ENCODE measurements at regions of chr7 and their contacts with region 1.

Region 1: GRCh38 chr7:92833024-92833765 is 3.2 kb downstream of the CDK6 start:
- DNase-seq: peak; percentile 70 to 97 (median 83)

Region 2: DNA sequence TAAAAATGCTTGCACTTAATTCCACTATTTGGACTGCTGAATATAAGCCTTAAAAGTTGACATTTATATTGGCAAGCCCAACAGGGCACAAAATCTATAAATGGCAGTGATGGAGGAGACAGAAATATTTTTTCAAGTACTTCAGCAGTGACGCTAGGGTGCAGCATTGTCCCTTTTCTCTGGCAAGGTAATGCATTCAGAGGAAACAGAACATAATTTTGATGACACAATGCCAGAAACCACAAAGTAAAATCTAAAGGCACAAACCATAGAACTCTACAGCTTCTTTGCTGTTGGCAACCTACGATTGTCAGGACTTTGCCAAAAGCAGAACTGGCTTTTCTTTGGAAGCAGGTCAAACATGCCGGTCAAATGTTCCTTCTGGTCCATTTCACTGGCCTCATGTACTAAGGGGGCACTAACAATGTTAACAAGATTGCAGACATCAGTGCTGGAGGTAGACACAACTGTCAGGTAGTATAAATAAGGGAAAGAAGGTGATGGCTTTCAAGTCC is 212.1 kb before region 1 on chr7:
- intact Hi-C with region 1: loop called (anchors 2 kb)
- DNase-seq: peak in 8 of 10 donors; percentile 34 to 92 (median 62)

Region 3: DNA sequence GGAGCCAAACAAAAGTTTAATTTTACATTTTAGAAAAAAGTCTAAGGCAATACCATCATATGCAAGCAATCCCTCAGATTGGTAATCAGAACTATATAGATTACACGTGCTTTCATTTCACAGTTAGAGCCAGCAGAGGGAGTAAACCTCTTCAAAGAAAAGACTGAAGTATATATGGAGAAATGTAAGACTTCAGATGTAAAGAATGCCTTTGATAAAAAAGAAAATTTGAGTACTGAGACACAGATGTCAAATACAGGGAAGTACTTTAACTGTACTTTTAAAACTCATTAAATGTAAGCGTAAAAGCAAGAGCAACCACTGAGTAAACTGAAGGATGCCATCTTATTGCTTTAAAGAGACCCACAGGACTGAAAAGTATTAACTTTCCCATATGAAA is 141.6 kb before region 1 on chr7:
- intact Hi-C with region 1: loop called (anchors 1 kb)
- DNase-seq: no peak

Region 4: DNA sequence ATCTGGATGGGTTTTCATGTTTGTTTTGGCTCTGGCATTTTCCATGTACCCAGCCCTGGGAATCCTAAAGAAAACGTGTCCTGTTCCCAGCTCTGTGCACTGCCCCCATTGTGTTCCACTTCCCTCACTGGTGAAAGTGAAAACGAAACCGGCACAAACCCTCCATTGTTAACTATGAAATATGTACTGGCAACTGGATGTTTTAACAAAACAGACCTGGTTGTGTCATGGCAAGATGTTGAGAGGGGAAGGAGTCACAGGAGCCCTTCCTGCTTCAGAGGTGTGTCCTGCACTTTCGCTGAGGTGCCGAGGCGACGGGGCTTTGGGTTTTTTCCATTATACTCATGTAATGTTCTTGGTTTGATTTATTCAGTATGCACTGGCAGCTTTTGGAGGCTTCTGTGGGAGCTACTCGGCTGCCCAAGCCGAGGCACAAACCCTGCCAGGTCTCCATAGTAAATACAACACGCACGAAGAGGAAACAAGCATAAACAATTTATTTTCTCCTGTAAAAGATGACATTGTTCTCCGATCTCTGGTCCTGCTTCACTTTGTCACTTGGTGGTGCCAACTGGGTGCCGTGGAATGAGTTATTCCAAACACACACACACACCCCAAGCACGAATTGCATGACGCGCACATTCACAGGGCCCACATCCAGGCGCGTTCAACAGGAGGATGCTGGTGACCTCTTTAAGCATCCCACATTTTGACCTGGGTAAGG is 115.0 kb before region 1 on chr7:
- intact Hi-C with region 1: loop called (anchors 5 kb)
- DNase-seq: peak; percentile 20 to 92 (median 58)

Region 5: GRCh38 chr7:92781117-92781720 is 52.0 kb before region 1 on chr7:
- intact Hi-C with region 1: loop called (anchors 5 kb)
- DNase-seq: peak in 9 of 10 donors; percentile 29 to 94 (median 52)

Region 6: DNA sequence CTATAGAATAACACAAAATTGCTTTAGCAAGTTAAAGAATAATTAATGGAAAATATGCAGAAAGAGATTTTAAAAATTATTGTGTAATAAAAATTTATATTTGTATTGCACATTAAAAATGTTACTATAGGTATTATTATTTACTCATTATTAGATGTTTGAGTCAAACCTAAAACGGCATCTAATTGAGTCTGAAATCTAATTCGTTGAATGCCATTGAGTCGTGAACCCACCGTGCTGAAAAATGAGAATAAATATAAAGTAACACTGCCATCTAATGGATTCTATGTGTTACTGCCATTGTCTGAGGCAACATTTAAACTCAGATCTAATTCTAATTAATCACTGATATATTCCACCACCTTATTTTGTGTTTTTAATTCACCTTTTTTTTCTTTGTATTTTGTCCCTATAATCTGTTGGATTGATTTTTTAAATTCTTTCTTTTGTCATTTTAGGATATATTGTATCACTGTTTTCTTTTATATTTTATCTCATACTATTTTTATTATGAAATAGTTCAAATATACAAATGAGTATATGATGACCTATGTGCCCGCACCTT is 222.4 kb after region 1 on chr7:
- intact Hi-C with region 1: loop called (anchors 10 kb)
- DNase-seq: no peak